ENCODE measurements at regions of chr2 and their contacts with region 1.

Region 1: DNA sequence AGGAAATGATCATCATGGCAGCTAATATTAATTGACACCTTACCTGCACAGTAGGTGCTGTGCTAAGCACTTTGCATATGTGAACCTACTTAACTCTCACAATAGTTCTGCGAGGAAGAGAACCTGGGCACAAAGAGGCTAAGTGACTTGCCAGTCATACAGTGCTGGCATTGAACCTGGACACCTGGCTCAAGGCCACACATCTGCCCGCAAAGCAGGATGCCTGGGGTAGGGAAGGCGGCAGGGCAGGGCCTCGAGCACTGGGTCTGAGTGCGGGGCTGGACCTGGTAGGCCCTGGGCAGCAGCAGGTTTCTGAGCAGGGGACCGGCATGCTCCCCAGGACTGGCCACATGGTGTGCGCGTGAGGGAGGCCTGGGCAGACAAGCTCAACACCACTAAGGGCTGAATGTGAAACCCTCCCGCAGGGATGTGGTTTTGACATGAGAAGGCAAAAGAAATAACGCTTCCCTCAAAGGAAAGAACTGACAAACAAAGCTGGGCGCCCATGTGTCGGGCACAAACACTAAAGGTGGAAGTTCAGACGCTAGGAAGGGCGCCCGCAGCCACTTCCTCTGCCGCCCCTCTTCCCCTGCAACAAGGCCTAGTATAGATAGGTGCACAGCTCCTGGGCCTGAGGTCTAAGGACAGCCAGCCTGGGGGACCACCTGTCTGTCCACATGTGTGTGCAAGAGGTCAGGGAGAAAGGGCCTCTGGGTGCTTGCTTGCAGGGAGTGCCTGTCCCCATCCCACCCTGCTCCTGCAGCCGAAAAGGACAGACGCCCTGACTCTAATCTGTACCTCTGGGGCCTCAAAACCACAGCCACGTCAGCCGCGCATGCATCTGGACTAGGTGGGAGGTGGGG is 92.5 kb downstream of the ZFP36L2 start:
- DNase-seq: no peak
- H3K27ac ChIP-seq: peak overlapping the region; percentile 98
- CTCF ChIP-seq: no peak

Region 2: GRCh38 chr2:42792583-42793333 is 341.2 kb before region 1 on chr2 and contains the start of gene HAAO:
- CTCF ChIA-PET with region 1: no interaction called
- POLR2A ChIA-PET with region 1: no interaction called
- DNase-seq: peak; percentile 17
- H3K27ac ChIP-seq: no peak within 1 kb of the TSS
- CTCF ChIP-seq: no peak

Region 3: GRCh38 chr2:43077876-43078275 is 56.1 kb before region 1 on chr2:
- CTCF ChIA-PET with region 1: interaction called, 5 read pairs
- POLR2A ChIA-PET with region 1: interaction called, 15 read pairs
- DNase-seq: no peak
- H3K27ac ChIP-seq: peak overlapping the region; percentile 100
- CTCF ChIP-seq: no peak

Measured in RWPE1 (cell line).